Ascending aorta (tissue), 2 donors: ENCODE measurements at regions of chr9 and their contacts with region 1.

Region 1: DNA sequence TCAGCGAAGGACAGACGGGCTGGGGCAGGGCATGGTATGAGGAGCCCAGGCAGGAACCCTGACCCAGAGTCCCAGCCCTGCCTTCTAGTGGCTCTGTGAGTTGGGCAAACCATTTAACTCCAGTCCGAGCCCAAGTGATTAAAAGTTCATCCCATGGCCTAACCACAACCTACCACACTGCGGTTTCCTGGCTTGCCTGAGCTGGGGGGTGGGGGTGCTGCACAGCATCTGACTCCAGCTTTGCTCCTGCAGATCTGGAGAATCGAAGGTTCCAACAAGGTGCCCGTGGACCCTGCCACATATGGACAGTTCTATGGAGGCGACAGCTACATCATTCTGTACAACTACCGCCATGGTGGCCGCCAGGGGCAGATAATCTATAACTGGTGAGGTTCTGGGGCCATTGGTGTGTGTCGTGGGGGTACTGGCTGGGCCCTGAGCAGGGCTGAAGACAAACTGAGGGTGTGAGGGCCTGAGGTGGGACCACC is 49.0 kb downstream of the STOM start:
- DNase-seq: peak in 1 of 2 donors; percentile 61
- H3K4me3 ChIP-seq: no peak overlapping the region
- H3K27ac ChIP-seq: peak overlapping the region; percentile 98 to 99
- H3K4me1 ChIP-seq: peaks cover 20 to 71% of the 10 kb centered on the region in 2 donors
- H3K27me3 ChIP-seq: no peaks in the 10 kb centered on the region
- CTCF ChIP-seq: no peak

Region 2: DNA sequence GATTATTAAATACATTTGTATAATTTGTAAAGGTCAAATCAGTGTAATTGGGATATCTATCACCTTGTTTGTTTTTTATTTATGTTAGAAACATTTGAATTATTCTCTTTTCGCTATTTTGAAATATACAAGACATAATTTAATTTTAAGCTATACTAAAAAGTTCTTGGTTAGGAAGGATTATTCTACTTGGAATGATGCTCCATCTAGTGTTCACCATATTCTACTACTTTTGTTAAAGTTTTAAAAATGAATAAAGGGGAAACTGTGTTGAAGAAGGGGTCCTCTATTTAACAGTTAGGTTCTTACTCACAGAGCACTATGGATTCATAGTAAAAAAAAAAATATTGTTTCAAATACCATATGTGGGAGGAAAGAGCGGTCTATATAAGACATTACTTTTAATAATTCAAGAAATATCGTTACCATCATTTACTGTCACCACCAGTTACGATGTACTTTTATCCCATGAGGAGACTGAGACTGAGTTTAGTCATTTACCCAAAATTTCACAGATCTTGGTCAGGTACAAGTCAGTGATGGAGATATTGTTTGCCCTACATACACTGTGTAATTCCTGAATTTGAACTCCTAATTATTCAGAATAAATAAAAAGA is 55.3 kb after region 1 on chr9:
- intact Hi-C with region 1: loop called (anchors 1 kb)
- DNase-seq: no peak
- H3K4me3 ChIP-seq: no peak overlapping the region
- H3K27ac ChIP-seq: no peak overlapping the region
- H3K4me1 ChIP-seq: peaks cover 0 to 19% of the 10 kb centered on the region in 2 donors
- H3K27me3 ChIP-seq: no peaks in the 10 kb centered on the region
- CTCF ChIP-seq: peak; percentile 57 to 59 (median 58)

Region 3: DNA sequence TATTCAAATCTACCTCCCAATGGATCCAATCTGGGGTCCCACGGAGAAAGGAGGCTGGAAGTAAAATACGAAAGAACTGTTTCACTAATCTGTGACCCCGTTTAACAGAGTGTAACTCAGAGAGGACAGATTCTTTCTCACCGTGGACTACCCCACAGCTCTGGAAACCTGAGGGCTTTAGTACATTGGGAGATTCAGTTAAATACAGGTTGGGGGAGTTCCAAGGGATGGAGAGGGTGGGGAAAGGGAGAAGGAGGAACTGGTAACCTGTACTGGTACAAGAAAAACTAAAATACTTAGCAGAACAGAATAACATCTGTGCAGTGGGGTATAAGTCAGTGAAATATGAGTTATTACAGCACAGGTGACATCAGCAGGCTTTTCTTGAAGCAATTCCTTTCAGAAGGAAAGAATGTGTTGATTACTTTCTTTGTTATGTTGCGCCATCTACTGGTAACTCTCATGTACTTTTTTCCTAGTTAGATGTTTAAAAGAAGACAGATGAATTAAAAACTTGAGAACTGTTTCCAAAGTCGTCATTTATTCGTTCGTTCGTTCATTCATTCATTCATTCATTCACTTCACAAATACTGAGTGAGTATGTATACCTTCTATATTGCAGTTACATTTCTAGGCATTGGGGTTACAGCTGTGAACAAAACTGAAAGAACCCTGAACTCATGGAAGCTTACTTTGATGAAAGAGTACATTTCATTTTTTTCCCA is 79.0 kb after region 1 on chr9:
- intact Hi-C with region 1: loop called (anchors 1 kb)
- DNase-seq: no peak
- H3K4me3 ChIP-seq: no peak overlapping the region
- H3K27ac ChIP-seq: no peak overlapping the region
- H3K4me1 ChIP-seq: no peaks in the 10 kb centered on the region
- H3K27me3 ChIP-seq: no peaks in the 10 kb centered on the region
- CTCF ChIP-seq: peak; percentile 48 to 60 (median 59)